ENCODE measurements at regions of chr3 and their contacts with region 1.

Region 1: GRCh38 chr3:133578548-133579191 is 5.2 kb downstream of the CDV3 start:
- DNase-seq: no peak
- ATAC-seq: no peak
- H3K4me3 ChIP-seq: no peak overlapping the region
- H3K27ac ChIP-seq: no peak overlapping the region
- H3K4me1 ChIP-seq: peaks cover 10 to 67% (median 61%) of the 10 kb centered on the region in 9 donors
- H3K27me3 ChIP-seq: no peaks in the 10 kb centered on the region
- CTCF ChIP-seq: peak in 8 of 9 donors; percentile 20 to 63 (median 44)

Region 2: GRCh38 chr3:131762981-131763564 is 1815.6 kb before region 1 on chr3:
- intact Hi-C with region 1: loop called in 1 of 10 experiments (anchors 5 kb)
- DNase-seq: no peak
- ATAC-seq: no peak
- H3K4me3 ChIP-seq: no peak overlapping the region
- H3K27ac ChIP-seq: no peak overlapping the region
- H3K4me1 ChIP-seq: no peaks in the 10 kb centered on the region
- H3K27me3 ChIP-seq: no peaks in the 10 kb centered on the region
- CTCF ChIP-seq: no peak

Region 3: GRCh38 chr3:133487920-133488540 is 90.6 kb before region 1 on chr3:
- intact Hi-C with region 1: loop called in 3 of 10 experiments (anchors 5 to 10 kb)
- DNase-seq: peak in 1 of 2 donors; percentile 28
- ATAC-seq: peak in 1 of 8 donors; percentile 61
- H3K4me3 ChIP-seq: no peak overlapping the region
- H3K27ac ChIP-seq: no peak overlapping the region
- H3K4me1 ChIP-seq: no peaks in the 10 kb centered on the region
- H3K27me3 ChIP-seq: no peaks in the 10 kb centered on the region
- CTCF ChIP-seq: peak; percentile 21 to 75 (median 60)

Measured in heart right ventricle (tissue), 16 donors.